GM12878 (cell line): ENCODE measurements at regions of chr11 and their contacts with region 1.

Region 1: DNA sequence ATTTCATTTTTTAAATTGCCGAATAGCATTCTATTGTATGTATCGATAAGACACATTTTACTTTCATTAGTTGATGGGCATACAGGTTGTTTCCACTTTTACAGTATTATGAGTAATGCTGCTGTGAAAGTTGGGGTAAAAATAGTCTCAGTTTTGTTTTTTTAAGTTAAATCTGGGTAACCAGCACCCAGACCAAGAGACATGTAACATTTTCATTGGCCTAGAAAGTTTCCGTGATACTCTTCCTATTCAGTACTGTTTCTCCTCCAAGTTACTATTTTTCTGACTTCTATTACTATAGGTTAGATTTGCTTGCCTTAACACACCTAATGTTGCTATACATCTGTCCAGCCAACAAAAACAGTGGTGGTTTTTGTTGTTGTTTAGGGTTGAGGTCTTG is 12.3 kb downstream of the IPO7 start:
- DNase-seq: peak; percentile 60
- ATAC-seq: peak; percentile 60
- H3K4me3 ChIP-seq: peak overlapping the region; percentile 35; the same call in 1 of the 2 replicates
- H3K27ac ChIP-seq: peak overlapping the region; percentile 49
- H3K4me1 ChIP-seq: peaks cover 10% of the 10 kb centered on the region
- H3K27me3 ChIP-seq: no peaks in the 10 kb centered on the region
- CTCF ChIP-seq: no peak
- EP300 ChIP-seq: no peak
- POLR2A ChIP-seq: no peak
- RAD21 ChIP-seq: no peak

Region 2: GRCh38 chr11:8593935-8594909 is 802.5 kb before region 1 on chr11 and contains the start of gene STK33:
- CTCF ChIA-PET with region 1: no interaction called
- POLR2A ChIA-PET with region 1: no interaction called
- RAD21 ChIA-PET with region 1: no interaction called
- SMC1A ChIA-PET with region 1: no interaction called
- in situ Hi-C with region 1: no loop called
- intact Hi-C with region 1: no loop called
- DNase-seq: no peak
- ATAC-seq: peak; percentile 98
- H3K4me3 ChIP-seq: peak within 1 kb of the TSS; percentile 92
- H3K27ac ChIP-seq: peak within 1 kb of the TSS; percentile 84
- H3K4me1 ChIP-seq: peaks cover 3% of the 10 kb centered on the region; the same call in 1 of the 2 replicates
- H3K27me3 ChIP-seq: no peaks in the 10 kb centered on the region
- CTCF ChIP-seq: no peak
- EP300 ChIP-seq: no peak
- POLR2A ChIP-seq: peak; percentile 68
- RAD21 ChIP-seq: no peak
- polyA plus RNA-seq, gene STK33: 5.2 to 8.3 TPM

Region 3: GRCh38 chr11:9384535-9385303 is 12.0 kb before region 1 on chr11 and contains the start of gene IPO7:
- CTCF ChIA-PET with region 1: interaction called, 18 read pairs
- POLR2A ChIA-PET with region 1: interaction called, 17 read pairs
- RAD21 ChIA-PET with region 1: interaction called, 12 read pairs
- SMC1A ChIA-PET with region 1: interaction called, 19 read pairs
- in situ Hi-C with region 1: no loop called
- intact Hi-C with region 1: no loop called
- DNase-seq: peak; percentile 60
- ATAC-seq: peak; percentile 97
- H3K4me3 ChIP-seq: peak within 1 kb of the TSS; percentile 97
- H3K27ac ChIP-seq: peak within 1 kb of the TSS; percentile 91
- H3K4me1 ChIP-seq: peaks cover 3% of the 10 kb centered on the region; the same call in 1 of the 2 replicates
- H3K27me3 ChIP-seq: no peaks in the 10 kb centered on the region
- CTCF ChIP-seq: peak in 2 of 3 experiments; percentile 10 to 13; a peak in 1 of 6 replicates
- EP300 ChIP-seq: 0 out of 4 replicates have a peak, but pooled peaks of 1 of the 2 experiments have one; percentile 20
- POLR2A ChIP-seq: peak; percentile 99
- RAD21 ChIP-seq: no peak
- polyA plus RNA-seq, gene IPO7: 9.2 to 9.9 TPM

Region 4: DNA sequence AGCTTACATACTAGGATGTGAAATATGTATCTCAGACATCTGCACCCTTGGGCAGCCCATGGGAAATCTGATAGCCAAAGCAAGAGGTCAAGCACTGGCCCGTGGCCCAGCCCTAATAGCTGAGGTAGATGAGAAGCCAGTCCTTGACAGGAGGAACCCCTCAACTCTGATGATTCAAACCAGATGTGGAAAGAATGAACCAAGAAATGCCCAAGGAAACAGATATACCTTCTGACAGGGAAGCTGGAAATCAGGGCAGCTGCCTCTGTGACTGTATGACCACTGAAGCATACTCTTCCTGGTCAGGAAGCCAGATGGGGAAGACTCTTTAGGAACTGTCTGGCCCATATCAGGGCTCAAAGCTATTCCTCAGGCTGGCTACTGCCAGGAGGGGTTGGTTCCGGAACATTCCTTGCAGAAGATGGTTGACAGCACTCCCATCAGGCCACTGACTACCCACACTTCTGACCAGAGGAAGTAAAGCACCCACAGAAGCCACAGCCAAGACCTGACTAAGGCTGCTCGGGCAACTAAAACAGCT is 391.3 kb after region 1 on chr11:
- CTCF ChIA-PET with region 1: no interaction called
- POLR2A ChIA-PET with region 1: no interaction called
- RAD21 ChIA-PET with region 1: no interaction called
- SMC1A ChIA-PET with region 1: no interaction called
- in situ Hi-C with region 1: no loop called
- intact Hi-C with region 1: no loop called
- DNase-seq: no peak
- ATAC-seq: no peak
- H3K4me3 ChIP-seq: no peak overlapping the region
- H3K27ac ChIP-seq: no peak overlapping the region
- H3K4me1 ChIP-seq: no peaks in the 10 kb centered on the region
- H3K27me3 ChIP-seq: no peaks in the 10 kb centered on the region
- CTCF ChIP-seq: no peak
- EP300 ChIP-seq: no peak
- POLR2A ChIP-seq: no peak
- RAD21 ChIP-seq: no peak